MCF 10A (cell line): ENCODE measurements at regions of chr12 and their contacts with region 1.

Region 1: GRCh38 chr12:7188562-7189397 is 706 bp upstream of the PEX5 start:
- DNase-seq: peak; percentile 84
- H3K4me3 Mint-ChIP-seq: peak overlapping the region; percentile 93
- H3K27ac Mint-ChIP-seq: peak overlapping the region; percentile 98
- H3K4me1 Mint-ChIP-seq: peaks cover 27% of the 10 kb centered on the region
- H3K27me3 Mint-ChIP-seq: no peaks in the 10 kb centered on the region
- CTCF ChIP-seq: peak; percentile 61

Region 2: GRCh38 chr12:7092229-7092985 is 96.4 kb before region 1 on chr12 and contains the start of gene C1R:
- CTCF ChIA-PET with region 1: no interaction called
- POLR2A ChIA-PET with region 1: interaction called, 3 read pairs
- intact Hi-C with region 1: loop called (anchors 1 kb)
- DNase-seq: peak; percentile 88
- H3K4me3 Mint-ChIP-seq: peak within 1 kb of the TSS; percentile 79
- H3K27ac Mint-ChIP-seq: peak within 1 kb of the TSS; percentile 93
- H3K4me1 Mint-ChIP-seq: peaks cover 26% of the 10 kb centered on the region
- H3K27me3 Mint-ChIP-seq: no peaks in the 10 kb centered on the region
- CTCF ChIP-seq: peak; percentile 75
- total RNA-seq, gene C1R: 13.1 and 16.7 TPM in 2 replicates

Region 3: GRCh38 chr12:7142056-7142644 is 46.6 kb before region 1 on chr12:
- CTCF ChIA-PET with region 1: interaction called, 102 read pairs
- POLR2A ChIA-PET with region 1: interaction called, 3 read pairs
- intact Hi-C with region 1: loop called (anchors 1 kb)
- DNase-seq: peak; percentile 70
- H3K4me3 Mint-ChIP-seq: no peak overlapping the region
- H3K27ac Mint-ChIP-seq: no peak overlapping the region
- H3K4me1 Mint-ChIP-seq: no peaks in the 10 kb centered on the region
- H3K27me3 Mint-ChIP-seq: no peaks in the 10 kb centered on the region
- CTCF ChIP-seq: peak; percentile 45

Region 4: GRCh38 chr12:7155481-7156034 is 33.2 kb before region 1 on chr12:
- CTCF ChIA-PET with region 1: interaction called, 20 read pairs
- POLR2A ChIA-PET with region 1: interaction called, 4 read pairs
- intact Hi-C with region 1: no loop called
- DNase-seq: peak; percentile 83
- H3K4me3 Mint-ChIP-seq: no peak overlapping the region
- H3K27ac Mint-ChIP-seq: no peak overlapping the region
- H3K4me1 Mint-ChIP-seq: peaks cover 11% of the 10 kb centered on the region
- H3K27me3 Mint-ChIP-seq: no peaks in the 10 kb centered on the region
- CTCF ChIP-seq: no peak

Region 5: GRCh38 chr12:7162691-7163114 is 26.1 kb before region 1 on chr12:
- CTCF ChIA-PET with region 1: interaction called, 16 read pairs
- POLR2A ChIA-PET with region 1: interaction called, 4 read pairs
- intact Hi-C with region 1: loop called (anchors 2 kb)
- DNase-seq: peak; percentile 68
- H3K4me3 Mint-ChIP-seq: no peak overlapping the region
- H3K27ac Mint-ChIP-seq: no peak overlapping the region
- H3K4me1 Mint-ChIP-seq: peaks cover 26% of the 10 kb centered on the region
- H3K27me3 Mint-ChIP-seq: no peaks in the 10 kb centered on the region
- CTCF ChIP-seq: peak; percentile 25